Gastrocnemius medialis (tissue), 4 donors: ENCODE measurements at regions of chr20 and their contacts with region 1.

Region 1: DNA sequence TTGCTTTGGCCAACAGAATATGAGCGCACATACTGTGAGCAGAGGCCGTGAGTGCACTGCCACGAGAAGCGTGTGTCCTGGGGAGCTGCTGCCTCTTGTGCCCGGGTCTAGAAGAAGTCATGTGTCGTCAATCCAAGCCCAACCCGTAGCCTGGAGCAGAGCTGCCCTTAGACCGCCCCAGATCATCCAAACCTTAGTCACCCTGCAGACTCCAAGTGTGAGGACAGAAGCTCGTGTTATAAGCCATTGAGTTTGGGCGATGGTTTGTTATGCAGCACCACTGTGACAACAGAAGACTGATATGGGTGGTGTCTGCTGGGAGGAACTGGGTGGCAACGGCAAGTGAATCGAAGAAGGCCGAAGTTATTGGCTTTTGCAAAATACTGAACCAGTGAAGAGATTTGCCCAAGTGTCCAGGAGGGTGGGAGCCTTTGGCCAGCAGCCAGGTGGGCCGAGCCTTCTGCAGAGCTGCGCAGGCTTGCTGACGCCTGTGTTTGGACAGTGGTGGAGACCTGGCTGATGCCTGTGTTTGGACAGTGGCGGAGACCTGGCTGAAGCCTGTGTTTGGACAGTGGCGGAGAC is 101.3 kb upstream of the SULF2 start:
- DNase-seq: no peak
- ATAC-seq: no peak
- H3K4me3 ChIP-seq: no peak overlapping the region
- H3K27ac ChIP-seq: no peak overlapping the region
- H3K4me1 ChIP-seq: no peaks in the 10 kb centered on the region
- H3K27me3 ChIP-seq: no peaks in the 10 kb centered on the region
- CTCF ChIP-seq: no peak
- POLR2A ChIP-seq: no peak

Region 2: DNA sequence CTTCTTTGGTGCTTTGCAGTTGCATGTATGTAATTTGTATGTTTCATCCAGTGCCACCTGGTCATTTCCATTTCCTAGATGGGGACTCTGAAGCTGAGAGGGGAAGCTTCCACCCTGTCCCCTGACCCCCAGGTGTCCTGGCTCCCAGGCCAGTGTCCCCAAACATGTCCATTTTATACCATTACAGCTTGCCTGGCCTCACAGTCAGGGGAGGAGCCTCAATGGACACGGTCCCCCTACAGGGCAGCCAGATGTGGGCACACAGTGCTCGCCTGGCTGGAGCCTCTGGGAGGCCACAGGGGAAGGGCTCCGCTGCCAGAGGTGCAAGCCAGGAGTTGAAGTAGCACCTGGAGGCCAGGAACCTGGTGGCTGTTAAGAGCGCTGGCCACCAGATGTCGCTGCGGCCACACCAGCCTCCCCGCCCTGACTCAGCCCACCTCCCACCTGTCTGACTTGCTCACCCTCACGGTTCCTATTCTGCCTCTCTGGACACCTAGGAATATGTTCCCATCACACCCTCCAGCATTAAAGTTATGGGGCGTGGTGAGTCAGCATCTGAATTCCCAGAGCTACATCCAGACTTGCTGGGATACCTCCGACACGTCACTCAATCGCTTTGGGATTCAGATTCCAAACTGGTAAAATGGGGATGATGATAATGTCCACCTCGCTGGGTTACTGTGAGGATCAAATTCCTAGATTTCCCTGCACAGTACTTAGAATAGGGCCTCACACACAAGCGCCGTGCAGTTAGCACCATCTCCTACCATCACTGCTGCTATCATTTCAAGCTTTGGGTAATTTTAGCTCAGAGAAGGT is 208.7 kb before region 1 on chr20:
- in situ Hi-C with region 1: no loop called
- intact Hi-C with region 1: no loop called
- DNase-seq: no peak
- ATAC-seq: no peak
- H3K4me3 ChIP-seq: no peak overlapping the region
- H3K27ac ChIP-seq: no peak overlapping the region
- H3K4me1 ChIP-seq: no peaks in the 10 kb centered on the region
- H3K27me3 ChIP-seq: no peaks in the 10 kb centered on the region
- CTCF ChIP-seq: peak; percentile 35 to 72 (median 64)
- POLR2A ChIP-seq: no peak

Region 3: DNA sequence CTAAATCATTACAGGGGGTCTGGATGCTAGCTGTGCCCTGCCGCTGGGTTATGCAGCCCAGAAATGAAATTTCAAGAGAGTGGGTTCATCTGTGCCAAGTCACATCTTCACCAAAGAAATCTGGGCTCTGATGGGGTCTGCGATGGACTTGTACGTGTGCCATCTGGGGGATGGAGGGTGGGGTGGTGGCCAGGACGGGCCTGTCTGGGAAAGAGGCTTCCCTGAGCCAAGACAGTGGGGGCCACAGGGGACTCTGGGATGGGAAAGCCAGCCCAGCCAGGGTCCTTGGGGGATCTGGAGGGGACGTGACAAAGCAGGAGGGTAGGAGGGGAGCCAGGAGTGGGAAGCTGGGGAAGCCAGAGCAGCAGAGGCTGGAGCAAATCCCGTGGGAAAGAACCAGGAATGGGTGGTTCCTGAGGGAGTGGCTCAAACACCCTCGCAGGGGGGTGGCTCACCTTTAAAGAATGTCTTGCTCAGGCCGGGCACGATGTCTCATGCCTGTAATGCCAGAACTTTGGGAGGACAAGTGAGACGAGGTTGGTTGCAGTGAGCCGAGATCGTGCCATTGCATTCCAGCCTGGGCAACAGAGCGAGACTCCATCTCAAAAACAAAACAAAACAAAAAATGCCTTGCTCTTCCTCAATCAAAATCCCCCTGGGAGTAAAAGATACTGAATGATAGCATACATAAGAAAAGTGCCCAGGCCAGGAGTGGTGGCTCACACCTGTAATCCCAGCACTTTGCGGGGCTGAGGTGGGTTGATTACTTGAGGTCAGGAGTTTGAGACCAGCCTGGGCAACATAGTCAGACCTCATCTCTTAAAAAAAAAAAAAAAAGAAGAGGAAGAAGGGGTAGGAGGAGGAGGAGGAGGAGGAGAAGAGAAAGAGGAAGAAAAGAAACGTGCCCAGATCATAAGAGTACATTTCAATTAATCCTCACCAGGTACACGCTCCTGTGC is 64.8 kb before region 1 on chr20:
- in situ Hi-C with region 1: no loop called
- intact Hi-C with region 1: loop called (anchors 10 kb)
- DNase-seq: no peak
- ATAC-seq: no peak
- H3K4me3 ChIP-seq: no peak overlapping the region
- H3K27ac ChIP-seq: no peak overlapping the region
- H3K4me1 ChIP-seq: no peaks in the 10 kb centered on the region
- H3K27me3 ChIP-seq: peaks cover 0 to 8% (median 0%) of the 10 kb centered on the region in 3 donors
- CTCF ChIP-seq: no peak
- POLR2A ChIP-seq: no peak

Region 4: GRCh38 chr20:47847868-47848531 is 38.6 kb before region 1 on chr20:
- in situ Hi-C with region 1: loop called in 1 of 4 experiments (anchors 10 kb)
- intact Hi-C with region 1: no loop called
- DNase-seq: no peak
- ATAC-seq: no peak
- H3K4me3 ChIP-seq: no peak overlapping the region
- H3K27ac ChIP-seq: no peak overlapping the region
- H3K4me1 ChIP-seq: no peaks in the 10 kb centered on the region
- H3K27me3 ChIP-seq: peaks cover 0 to 9% (median 0%) of the 10 kb centered on the region in 3 donors
- CTCF ChIP-seq: no peak
- POLR2A ChIP-seq: no peak

Region 5: GRCh38 chr20:48523212-48523941 is 636.8 kb after region 1 on chr20:
- in situ Hi-C with region 1: loop called (anchors 5 kb)
- intact Hi-C with region 1: loop called (anchors 10 kb)
- DNase-seq: no peak
- ATAC-seq: no peak
- H3K4me3 ChIP-seq: no peak overlapping the region
- H3K27ac ChIP-seq: no peak overlapping the region
- H3K4me1 ChIP-seq: no peaks in the 10 kb centered on the region
- H3K27me3 ChIP-seq: no peaks in the 10 kb centered on the region
- CTCF ChIP-seq: no peak
- POLR2A ChIP-seq: no peak

Region 6: DNA sequence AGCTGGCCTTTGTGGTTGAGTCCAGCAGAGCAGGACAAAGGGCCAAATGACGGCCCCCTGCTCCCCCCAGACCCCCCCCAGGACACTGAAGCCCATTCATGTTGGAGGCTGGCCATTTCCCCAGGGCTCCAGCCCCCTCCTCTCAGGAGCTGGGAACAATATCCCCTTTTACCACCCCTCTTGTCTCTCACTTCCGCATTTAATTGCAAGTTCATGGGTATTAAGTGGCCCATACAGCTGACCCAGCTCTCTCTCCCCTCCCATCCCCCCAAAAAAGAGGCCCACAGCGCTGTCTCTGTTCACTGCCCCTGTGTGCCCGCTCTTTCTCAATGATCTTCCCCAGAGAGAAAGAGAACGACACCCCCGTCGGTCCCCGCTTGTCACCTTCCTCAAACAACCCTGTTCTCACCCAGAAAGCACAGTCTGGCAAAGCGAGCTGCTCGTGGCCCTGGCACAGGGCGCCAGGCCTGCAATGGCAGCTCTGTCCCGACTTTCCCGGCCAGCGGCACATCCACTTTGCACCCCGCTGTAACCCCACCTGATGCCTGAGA is 910.8 kb after region 1 on chr20:
- in situ Hi-C with region 1: no loop called
- intact Hi-C with region 1: no loop called
- DNase-seq: peak in 1 of 2 donors; percentile 42
- ATAC-seq: peak in 1 of 2 donors; percentile 18
- H3K4me3 ChIP-seq: no peak overlapping the region
- H3K27ac ChIP-seq: no peak overlapping the region
- H3K4me1 ChIP-seq: peaks cover 7 to 10% of the 10 kb centered on the region in 2 donors
- H3K27me3 ChIP-seq: no peaks in the 10 kb centered on the region
- CTCF ChIP-seq: no peak
- POLR2A ChIP-seq: no peak